HEK293 (cell line): ENCODE measurements at regions of chr7 and their contacts with region 1.

Region 1: GRCh38 chr7:111741811-111742240 is 179.5 kb upstream of the IMMP2L start:
- H3K4me3 ChIP-seq: no peak overlapping the region
- H3K27ac ChIP-seq: no peak overlapping the region
- H3K4me1 ChIP-seq: no peaks in the 10 kb centered on the region
- CTCF ChIP-seq: peak; percentile 55; the same call in 1 of the 2 replicates

Region 2: GRCh38 chr7:111752022-111752582 is 10.3 kb after region 1 on chr7:
- CTCF ChIA-PET with region 1: interaction called, 15 read pairs
- POLR2A ChIA-PET with region 1: no interaction called
- H3K4me3 ChIP-seq: no peak overlapping the region
- H3K27ac ChIP-seq: no peak overlapping the region
- H3K4me1 ChIP-seq: no peaks in the 10 kb centered on the region
- CTCF ChIP-seq: 0 out of 2 replicates have a peak, but pooled peaks have one; percentile 33